ENCODE measurements at regions of chr2 and their contacts with region 1.

Region 1: DNA sequence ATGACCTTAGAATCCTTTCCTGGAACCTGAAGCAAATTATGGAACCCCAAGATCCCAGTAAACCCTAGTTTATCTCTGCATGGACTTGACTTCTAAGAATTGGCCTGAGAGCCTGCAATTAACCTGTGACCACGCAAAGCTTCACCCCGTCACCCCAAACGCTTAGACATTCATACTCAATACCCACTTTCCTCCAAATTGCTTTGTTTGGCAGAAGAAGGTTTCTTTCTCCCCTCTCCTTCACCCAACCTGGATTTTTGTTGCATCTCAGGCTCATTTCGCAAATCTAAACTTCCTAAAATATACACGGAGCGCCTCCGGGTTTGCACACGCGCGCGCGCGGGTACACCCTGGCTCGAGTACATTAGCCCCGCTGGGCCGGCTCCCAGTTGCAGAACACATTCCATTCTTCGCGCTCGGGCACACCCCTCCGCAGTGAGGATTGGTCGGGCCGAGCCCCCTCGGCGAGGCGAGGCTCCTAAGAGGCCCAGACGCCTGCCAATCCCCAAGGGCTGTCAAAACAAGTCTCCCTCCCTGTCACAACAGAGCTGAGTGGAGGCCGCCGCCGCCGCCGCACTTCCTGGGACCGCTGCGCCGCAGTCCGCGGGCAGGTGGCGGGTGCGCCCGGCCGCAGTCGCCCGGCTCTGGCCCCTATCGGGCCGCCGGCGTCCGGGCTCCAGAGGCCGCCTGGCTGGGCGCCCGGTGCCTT is at the start of gene PLCL1:
- DNase-seq: peak; percentile 90
- H3K4me3 Mint-ChIP-seq: peak within 1 kb of the TSS; percentile 92
- H3K27ac Mint-ChIP-seq: peak within 1 kb of the TSS; percentile 50
- H3K4me1 Mint-ChIP-seq: peaks cover 42% of the 10 kb centered on the region
- H3K27me3 Mint-ChIP-seq: peaks cover 26% of the 10 kb centered on the region
- total RNA-seq, gene PLCL1: 1.8 and 2.0 TPM in 2 replicates

Region 2: DNA sequence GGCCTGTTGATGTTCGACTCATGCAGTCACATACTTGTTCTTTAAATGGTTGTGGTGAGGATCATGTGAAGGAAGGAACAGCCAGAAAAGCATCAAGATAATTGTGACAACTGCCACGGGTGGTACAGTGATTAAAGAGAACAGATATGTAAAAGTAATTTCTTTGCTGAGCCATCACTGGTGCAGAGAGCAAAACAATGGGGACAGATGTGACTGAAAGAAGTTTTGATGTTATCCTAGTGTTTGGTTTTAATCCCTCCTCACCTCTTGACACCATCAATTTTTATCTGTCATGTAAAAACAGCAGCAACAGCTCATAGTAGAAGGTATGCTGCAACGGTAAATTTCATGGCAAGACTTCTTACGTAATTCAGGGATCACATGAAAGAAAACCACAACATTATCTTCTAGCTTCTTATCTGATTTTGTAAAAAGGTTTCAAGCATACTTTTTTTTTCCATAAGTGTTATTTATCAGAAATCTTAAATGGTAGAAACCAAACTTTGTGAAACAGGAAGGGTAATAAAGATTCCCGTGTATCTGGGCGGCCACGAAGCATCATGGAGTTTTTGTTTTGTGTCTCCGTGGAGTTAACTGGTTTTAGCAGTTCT is 65.4 kb after region 1 on chr2:
- intact Hi-C with region 1: loop called (anchors 1 kb)
- DNase-seq: peak; percentile 38
- H3K4me3 Mint-ChIP-seq: peak overlapping the region; percentile 54
- H3K27ac Mint-ChIP-seq: peak overlapping the region; percentile 84
- H3K4me1 Mint-ChIP-seq: peaks cover 51% of the 10 kb centered on the region
- H3K27me3 Mint-ChIP-seq: no peaks in the 10 kb centered on the region

Region 3: DNA sequence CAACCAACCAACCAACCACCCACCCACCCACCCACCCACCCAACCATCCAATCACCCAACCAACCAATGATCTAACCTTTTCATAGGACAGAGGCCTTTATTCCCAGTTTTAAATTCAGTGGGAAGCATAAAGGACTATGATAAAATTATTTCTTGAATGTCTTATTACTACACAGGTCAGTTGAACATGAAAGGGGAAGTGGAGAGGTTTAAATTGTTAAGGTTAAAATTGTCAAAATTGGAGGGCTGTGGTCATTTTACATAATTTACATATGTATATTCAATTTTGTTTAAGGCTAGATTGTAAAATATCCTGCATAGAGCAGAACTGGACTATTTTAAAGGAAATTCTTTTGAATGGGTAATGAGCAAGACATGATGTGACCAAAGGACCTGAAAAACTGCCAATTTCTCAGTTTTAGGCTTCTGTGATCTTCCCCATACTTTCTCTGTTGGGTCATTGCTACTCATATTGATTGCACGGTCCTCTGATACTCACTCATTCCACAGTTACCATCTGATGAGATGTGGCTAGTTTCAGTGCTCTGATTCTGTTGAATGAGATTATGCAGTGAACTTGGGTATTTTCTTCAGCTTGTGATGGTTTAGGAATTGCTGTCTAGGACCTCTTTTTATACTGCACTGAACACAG is 127.6 kb after region 1 on chr2:
- intact Hi-C with region 1: loop called (anchors 5 kb)
- DNase-seq: no peak
- H3K4me3 Mint-ChIP-seq: no peak overlapping the region
- H3K27ac Mint-ChIP-seq: no peak overlapping the region
- H3K4me1 Mint-ChIP-seq: peaks cover 39% of the 10 kb centered on the region
- H3K27me3 Mint-ChIP-seq: peaks cover 6% of the 10 kb centered on the region

Region 4: DNA sequence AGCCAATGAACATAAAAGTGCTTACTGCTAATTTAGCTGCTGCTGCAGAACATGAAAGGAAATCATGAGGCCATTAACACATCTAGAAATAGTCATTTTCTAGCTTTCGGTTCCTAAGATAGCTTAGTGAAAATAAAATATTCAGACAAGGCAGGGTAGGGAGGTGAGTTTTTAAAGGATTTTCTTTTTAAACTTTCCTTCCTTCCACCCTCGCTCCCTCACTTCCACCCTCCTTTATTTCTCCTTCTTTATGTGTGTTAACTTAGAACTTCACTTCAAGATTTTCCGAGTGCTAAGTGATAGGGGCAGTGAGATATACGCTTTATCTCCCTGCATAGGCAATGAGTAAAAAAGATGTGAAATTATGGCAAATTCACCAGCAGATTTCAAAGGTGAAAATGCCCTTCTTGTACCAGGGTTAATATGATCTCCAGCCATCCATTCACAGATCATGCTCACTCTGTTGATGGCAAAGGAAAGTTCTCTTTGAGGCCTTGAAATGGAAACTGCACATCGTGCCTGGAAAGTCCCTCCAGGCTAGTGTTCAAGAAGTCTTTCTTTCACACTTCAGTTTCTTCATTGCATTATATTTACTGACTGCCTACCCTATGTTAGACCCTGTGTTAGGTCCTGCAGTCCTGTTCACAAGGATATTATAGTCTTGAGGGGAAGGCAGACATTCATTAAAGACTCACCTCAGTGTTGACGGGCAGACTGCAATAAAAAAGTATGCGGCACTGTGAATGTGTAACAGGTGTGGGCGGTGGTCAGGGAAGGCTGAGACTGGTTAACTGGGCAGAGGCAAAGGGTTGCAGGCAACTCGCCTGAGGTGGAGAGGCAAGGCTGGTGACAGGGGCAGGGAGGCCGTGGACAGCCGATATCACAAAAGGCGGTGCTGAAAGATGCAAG is 201.0 kb after region 1 on chr2:
- intact Hi-C with region 1: loop called (anchors 5 kb)
- DNase-seq: no peak
- H3K4me3 Mint-ChIP-seq: peak overlapping the region; percentile 20
- H3K27ac Mint-ChIP-seq: peak overlapping the region; percentile 79
- H3K4me1 Mint-ChIP-seq: peaks cover 49% of the 10 kb centered on the region
- H3K27me3 Mint-ChIP-seq: no peaks in the 10 kb centered on the region

Region 5: DNA sequence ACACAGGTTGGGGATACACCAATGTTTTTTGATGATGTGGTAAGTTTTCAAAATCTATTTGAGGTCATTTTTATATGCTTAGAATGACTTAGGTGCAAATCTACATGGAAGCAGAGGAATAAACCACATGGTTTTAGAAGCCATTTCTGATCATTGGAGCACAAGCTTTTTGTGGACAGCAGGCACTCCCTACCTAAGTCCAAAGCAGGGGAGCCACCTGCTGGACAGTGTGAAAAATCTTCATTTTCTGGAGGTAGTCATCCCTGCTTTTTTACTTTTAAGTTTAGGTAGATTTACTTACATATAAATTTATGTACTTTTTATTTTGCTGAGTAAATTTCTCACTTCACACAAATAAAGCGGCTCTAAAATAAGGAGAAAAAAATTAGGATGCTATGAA is 323.4 kb after region 1 on chr2:
- intact Hi-C with region 1: loop called (anchors 1 kb)
- DNase-seq: peak; percentile 16
- H3K4me3 Mint-ChIP-seq: no peak overlapping the region
- H3K27ac Mint-ChIP-seq: no peak overlapping the region
- H3K4me1 Mint-ChIP-seq: no peaks in the 10 kb centered on the region
- H3K27me3 Mint-ChIP-seq: no peaks in the 10 kb centered on the region

Region 6: GRCh38 chr2:198863655-198864054 is 1059.5 kb after region 1 on chr2:
- intact Hi-C with region 1: no loop called
- DNase-seq: no peak
- H3K4me3 Mint-ChIP-seq: no peak overlapping the region
- H3K27ac Mint-ChIP-seq: no peak overlapping the region
- H3K4me1 Mint-ChIP-seq: no peaks in the 10 kb centered on the region
- H3K27me3 Mint-ChIP-seq: no peaks in the 10 kb centered on the region